GM12878 (cell line): ENCODE measurements at regions of chr11 and their contacts with region 1.

Region 1: GRCh38 chr11:75826461-75827230 is 11.6 kb downstream of the UVRAG start:
- DNase-seq: no peak
- ATAC-seq: peak; percentile 11
- H3K4me3 ChIP-seq: peak overlapping the region; percentile 63; the same call in 1 of the 2 replicates
- H3K27ac ChIP-seq: peak overlapping the region; percentile 92
- H3K4me1 ChIP-seq: peaks cover 35% of the 10 kb centered on the region
- H3K27me3 ChIP-seq: no peaks in the 10 kb centered on the region
- CTCF ChIP-seq: no peak
- EP300 ChIP-seq: no peak
- POLR2A ChIP-seq: no peak
- RAD21 ChIP-seq: no peak

Region 2: GRCh38 chr11:75850787-75851186 is 24.1 kb after region 1 on chr11:
- CTCF ChIA-PET with region 1: interaction called, 4 read pairs
- POLR2A ChIA-PET with region 1: interaction called, 7 read pairs
- RAD21 ChIA-PET with region 1: interaction called, 8 read pairs
- SMC1A ChIA-PET with region 1: interaction called, 12 read pairs
- in situ Hi-C with region 1: no loop called
- intact Hi-C with region 1: no loop called
- DNase-seq: no peak
- ATAC-seq: peak; percentile 54
- H3K4me3 ChIP-seq: no peak overlapping the region
- H3K27ac ChIP-seq: peak overlapping the region; percentile 46; the same call in 1 of the 2 replicates
- H3K4me1 ChIP-seq: peaks cover 7% of the 10 kb centered on the region
- H3K27me3 ChIP-seq: no peaks in the 10 kb centered on the region
- CTCF ChIP-seq: no peak
- EP300 ChIP-seq: no peak
- POLR2A ChIP-seq: no peak
- RAD21 ChIP-seq: no peak

Region 3: GRCh38 chr11:75946531-75947530 is 120.2 kb after region 1 on chr11:
- CTCF ChIA-PET with region 1: no interaction called
- POLR2A ChIA-PET with region 1: interaction called, 13 read pairs
- RAD21 ChIA-PET with region 1: no interaction called
- SMC1A ChIA-PET with region 1: interaction called, 3 read pairs
- in situ Hi-C with region 1: no loop called
- intact Hi-C with region 1: no loop called
- DNase-seq: no peak
- ATAC-seq: peak; percentile 71
- H3K4me3 ChIP-seq: no peak overlapping the region
- H3K27ac ChIP-seq: peak overlapping the region; percentile 50
- H3K4me1 ChIP-seq: peaks cover 21% of the 10 kb centered on the region
- H3K27me3 ChIP-seq: no peaks in the 10 kb centered on the region
- CTCF ChIP-seq: no peak
- EP300 ChIP-seq: no peak
- POLR2A ChIP-seq: no peak
- RAD21 ChIP-seq: no peak